PC-9 (cell line): ENCODE measurements at regions of chr16 and their contacts with region 1.

Region 1: DNA sequence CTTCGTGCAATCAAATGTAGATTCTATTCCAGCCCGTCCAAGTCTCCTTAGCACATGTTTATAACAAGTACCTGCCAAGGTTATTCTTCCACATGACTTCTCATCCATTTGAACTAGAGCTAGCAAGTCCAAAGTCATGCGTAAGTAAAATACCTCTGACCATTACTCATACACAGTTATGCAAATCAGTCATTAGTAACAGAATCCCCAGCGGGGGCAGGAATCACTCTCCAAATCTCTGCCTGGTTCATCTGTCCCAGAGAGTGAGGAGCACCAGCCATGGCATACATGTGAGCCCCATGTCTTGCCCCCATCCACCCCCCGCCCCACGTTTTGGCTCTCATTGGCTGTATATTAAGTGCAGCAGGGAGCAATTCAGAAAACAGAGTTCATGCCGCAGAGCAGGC is 27.7 kb downstream of the SRL start:
- DNase-seq: peak; percentile 52 to 93
- H3K4me3 ChIP-seq: no peak overlapping the region
- H3K27ac ChIP-seq: peak overlapping the region; percentile 72
- H3K4me1 ChIP-seq: peaks cover 23% of the 10 kb centered on the region
- H3K27me3 ChIP-seq: no peaks in the 10 kb centered on the region
- CTCF ChIP-seq: no peak

Region 2: GRCh38 chr16:2236337-2237101 is 1977.7 kb before region 1 on chr16 and contains the start of gene DNASE1L2:
- CTCF ChIA-PET with region 1: no interaction called
- POLR2A ChIA-PET with region 1: no interaction called
- intact Hi-C with region 1: no loop called
- DNase-seq: no peak
- H3K4me3 ChIP-seq: no peak within 1 kb of the TSS
- H3K27ac ChIP-seq: no peak within 1 kb of the TSS
- H3K4me1 ChIP-seq: no peaks in the 10 kb centered on the region
- H3K27me3 ChIP-seq: no peaks in the 10 kb centered on the region
- CTCF ChIP-seq: no peak
- total RNA-seq, gene DNASE1L2: 6.0 and 7.3 TPM in 2 replicates

Region 3: DNA sequence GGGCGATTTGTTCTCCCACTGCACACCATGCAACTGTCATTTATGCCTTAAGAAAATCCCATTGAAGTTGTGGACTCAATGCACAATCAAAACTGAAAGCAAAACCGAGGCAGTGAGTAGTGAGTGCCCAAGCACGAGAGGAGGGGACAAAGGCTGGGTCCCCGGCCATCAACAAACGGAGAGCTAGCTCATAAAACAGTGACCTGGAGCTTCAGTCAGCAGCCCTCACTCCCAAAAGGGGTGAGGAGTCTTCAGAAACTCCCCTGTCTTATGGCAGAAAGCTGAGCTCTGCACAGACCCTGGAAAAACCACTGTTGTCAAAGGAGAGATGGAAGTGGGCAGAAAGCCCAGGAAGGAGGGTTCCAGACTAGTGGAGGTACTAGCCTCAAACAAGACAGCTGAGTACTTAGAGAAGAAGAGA is 194.8 kb before region 1 on chr16:
- CTCF ChIA-PET with region 1: no interaction called
- POLR2A ChIA-PET with region 1: no interaction called
- intact Hi-C with region 1: no loop called
- DNase-seq: no peak
- H3K4me3 ChIP-seq: no peak overlapping the region
- H3K27ac ChIP-seq: no peak overlapping the region
- H3K4me1 ChIP-seq: peaks cover 17% of the 10 kb centered on the region
- H3K27me3 ChIP-seq: no peaks in the 10 kb centered on the region
- CTCF ChIP-seq: no peak

Region 4: DNA sequence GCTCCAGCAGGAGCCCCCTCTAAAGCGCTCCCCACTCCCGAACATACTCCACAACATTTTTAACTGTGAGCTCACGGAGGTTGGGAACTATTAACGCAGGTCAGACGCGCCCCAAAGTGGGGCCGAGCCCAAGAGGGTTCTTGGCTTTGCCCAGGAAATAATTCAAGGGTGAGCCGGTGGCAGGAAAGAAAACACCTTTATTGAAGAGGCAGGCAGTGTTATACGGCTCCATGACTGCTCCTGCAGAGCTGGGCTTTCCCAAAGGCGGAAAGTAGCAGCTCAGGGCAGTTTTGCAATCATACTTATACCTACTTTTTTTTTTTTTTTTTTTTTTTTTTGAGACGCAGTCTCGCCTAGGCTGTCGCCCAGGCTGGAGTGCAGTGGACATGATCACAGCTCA is 104.2 kb before region 1 on chr16:
- CTCF ChIA-PET with region 1: no interaction called
- POLR2A ChIA-PET with region 1: interaction called, 26 read pairs
- intact Hi-C with region 1: no loop called
- DNase-seq: no peak
- H3K4me3 ChIP-seq: no peak overlapping the region
- H3K27ac ChIP-seq: no peak overlapping the region
- H3K4me1 ChIP-seq: no peaks in the 10 kb centered on the region
- H3K27me3 ChIP-seq: no peaks in the 10 kb centered on the region
- CTCF ChIP-seq: no peak

Region 5: GRCh38 chr16:4136229-4136813 is 77.9 kb before region 1 on chr16:
- CTCF ChIA-PET with region 1: no interaction called
- POLR2A ChIA-PET with region 1: no interaction called
- intact Hi-C with region 1: loop called (anchors 1 kb)
- DNase-seq: peak; percentile 95 to 97
- H3K4me3 ChIP-seq: peak overlapping the region; percentile 9; the same call in 1 of the 2 replicates
- H3K27ac ChIP-seq: peak overlapping the region; percentile 84
- H3K4me1 ChIP-seq: peaks cover 11% of the 10 kb centered on the region
- H3K27me3 ChIP-seq: no peaks in the 10 kb centered on the region
- CTCF ChIP-seq: no peak; the same call in 1 of the 2 replicates

Region 6: GRCh38 chr16:4176612-4177417 is 37.4 kb before region 1 on chr16:
- CTCF ChIA-PET with region 1: no interaction called
- POLR2A ChIA-PET with region 1: interaction called, 17 read pairs
- intact Hi-C with region 1: no loop called
- DNase-seq: peak; percentile 65 to 69
- H3K4me3 ChIP-seq: peak overlapping the region; percentile 36; the same call in 1 of the 2 replicates
- H3K27ac ChIP-seq: peak overlapping the region; percentile 69
- H3K4me1 ChIP-seq: peaks cover 32% of the 10 kb centered on the region
- H3K27me3 ChIP-seq: no peaks in the 10 kb centered on the region
- CTCF ChIP-seq: no peak

Region 7: GRCh38 chr16:4183237-4184036 is 30.8 kb before region 1 on chr16:
- CTCF ChIA-PET with region 1: no interaction called
- POLR2A ChIA-PET with region 1: interaction called, 13 read pairs
- intact Hi-C with region 1: no loop called
- DNase-seq: peak; percentile 92 to 97
- H3K4me3 ChIP-seq: peak overlapping the region; percentile 80
- H3K27ac ChIP-seq: peak overlapping the region; percentile 95
- H3K4me1 ChIP-seq: peaks cover 23% of the 10 kb centered on the region
- H3K27me3 ChIP-seq: no peaks in the 10 kb centered on the region
- CTCF ChIP-seq: no peak